Panc1 (cell line): ENCODE measurements at regions of chr16 and their contacts with region 1.

Region 1: DNA sequence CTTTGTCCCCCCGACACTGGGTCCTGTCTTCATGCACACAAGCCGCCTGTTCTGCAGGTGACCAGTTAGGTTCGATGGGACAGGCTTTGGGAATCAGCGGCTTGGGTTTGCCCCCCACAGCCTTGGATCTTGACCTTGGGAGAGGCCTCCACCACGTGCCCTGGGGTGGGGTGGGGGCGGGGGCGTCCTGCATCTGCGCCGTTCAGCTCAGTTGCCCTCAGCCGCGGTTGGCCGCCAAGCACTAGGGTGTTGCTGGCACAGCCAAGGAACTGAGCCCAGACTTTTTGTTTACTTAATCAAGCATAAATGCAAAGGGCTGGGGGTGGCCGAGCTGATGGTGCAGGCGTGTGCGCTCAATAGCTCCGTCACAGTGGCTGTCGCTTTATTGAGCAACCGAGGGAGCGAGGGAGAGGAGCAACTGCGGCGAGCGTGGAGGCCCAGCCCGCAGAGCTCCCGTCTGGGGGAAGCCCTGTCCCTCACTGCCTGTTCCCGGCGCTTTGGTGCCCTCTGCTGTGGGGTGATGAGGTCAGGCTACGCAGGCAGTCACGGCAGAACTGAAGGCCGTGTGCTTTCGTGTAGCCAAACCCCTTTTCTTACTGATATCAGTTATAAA is 33.9 kb downstream of the JPH3 start:
- DNase-seq: peak; percentile 59
- ATAC-seq: peak; percentile 93
- H3K4me3 ChIP-seq: peak overlapping the region; percentile 34 to 55
- H3K27ac ChIP-seq: no peak overlapping the region
- H3K4me1 ChIP-seq: peaks cover 4% of the 10 kb centered on the region
- H3K27me3 ChIP-seq: no peaks in the 10 kb centered on the region
- CTCF ChIP-seq: peak; percentile 74

Region 2: GRCh38 chr16:87190288-87191230 is 445.6 kb before region 1 on chr16:
- CTCF ChIA-PET with region 1: no interaction called
- POLR2A ChIA-PET with region 1: no interaction called
- in situ Hi-C with region 1: no loop called
- intact Hi-C with region 1: no loop called
- DNase-seq: no peak
- ATAC-seq: no peak
- H3K4me3 ChIP-seq: no peak overlapping the region
- H3K27ac ChIP-seq: no peak overlapping the region
- H3K4me1 ChIP-seq: no peaks in the 10 kb centered on the region
- H3K27me3 ChIP-seq: no peaks in the 10 kb centered on the region
- CTCF ChIP-seq: no peak

Region 3: DNA sequence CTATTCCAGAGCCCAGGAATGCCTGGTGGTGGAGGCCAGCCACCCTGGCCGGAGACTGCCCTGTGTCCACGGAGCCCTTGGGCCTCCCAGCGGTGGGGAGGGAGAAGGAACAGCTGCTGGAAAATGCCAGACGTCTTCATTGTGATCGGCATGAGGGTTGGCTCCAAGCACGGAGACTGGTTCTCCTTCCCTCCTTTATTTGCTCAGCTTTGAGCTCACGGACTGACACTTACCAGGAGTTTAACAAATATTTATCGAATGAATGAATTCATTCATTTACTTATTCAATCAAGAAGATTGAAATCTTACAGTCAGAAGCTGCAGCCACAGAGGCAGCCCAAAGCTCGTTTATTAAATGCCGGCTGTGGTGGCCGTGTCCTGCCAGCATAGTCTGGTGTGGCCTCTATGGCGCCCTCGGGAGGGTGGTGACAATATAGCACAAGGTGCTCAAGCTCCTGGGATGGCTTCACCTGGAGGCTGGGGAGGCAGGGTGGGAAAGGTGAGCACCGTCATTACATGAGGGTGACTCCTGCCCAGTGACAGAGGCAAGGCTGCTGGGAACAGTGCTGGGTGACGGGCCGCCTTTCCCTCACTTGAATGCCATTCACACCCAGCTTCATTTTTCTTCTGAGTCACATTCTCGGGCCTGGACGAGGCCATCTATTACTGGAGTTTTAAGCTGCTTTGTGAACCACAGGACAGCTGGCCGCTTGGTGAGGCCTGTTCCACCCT is 64.9 kb before region 1 on chr16:
- CTCF ChIA-PET with region 1: interaction called, 10 read pairs
- POLR2A ChIA-PET with region 1: no interaction called
- in situ Hi-C with region 1: no loop called
- intact Hi-C with region 1: no loop called
- DNase-seq: no peak
- ATAC-seq: peak; percentile 95
- H3K4me3 ChIP-seq: no peak overlapping the region
- H3K27ac ChIP-seq: no peak overlapping the region
- H3K4me1 ChIP-seq: peaks cover 10% of the 10 kb centered on the region
- H3K27me3 ChIP-seq: no peaks in the 10 kb centered on the region
- CTCF ChIP-seq: peak; percentile 77

Region 4: GRCh38 chr16:87587636-87588035 is 48.5 kb before region 1 on chr16:
- CTCF ChIA-PET with region 1: interaction called, 30 read pairs
- POLR2A ChIA-PET with region 1: interaction called, 3 read pairs
- in situ Hi-C with region 1: no loop called
- intact Hi-C with region 1: loop called (anchors 2 kb)
- DNase-seq: no peak
- ATAC-seq: no peak
- H3K4me3 ChIP-seq: no peak overlapping the region
- H3K27ac ChIP-seq: no peak overlapping the region
- H3K4me1 ChIP-seq: no peaks in the 10 kb centered on the region; the same call in 1 of the 2 replicates
- H3K27me3 ChIP-seq: no peaks in the 10 kb centered on the region
- CTCF ChIP-seq: no peak

Region 5: GRCh38 chr16:87616556-87616955 is 19.6 kb before region 1 on chr16:
- CTCF ChIA-PET with region 1: interaction called, 15 read pairs
- POLR2A ChIA-PET with region 1: no interaction called
- in situ Hi-C with region 1: no loop called
- intact Hi-C with region 1: no loop called
- DNase-seq: no peak
- ATAC-seq: no peak
- H3K4me3 ChIP-seq: no peak overlapping the region
- H3K27ac ChIP-seq: no peak overlapping the region
- H3K4me1 ChIP-seq: no peaks in the 10 kb centered on the region
- H3K27me3 ChIP-seq: no peaks in the 10 kb centered on the region
- CTCF ChIP-seq: no peak